Heart left ventricle (tissue), 16 donors: ENCODE measurements at regions of chr9 and their contacts with region 1.

Region 1: GRCh38 chr9:127318651-127319167 is 54.1 kb downstream of the GARNL3 start:
- DNase-seq: peak in 4 of 5 donors; percentile 28 to 64 (median 38)
- ATAC-seq: peak; percentile 51 to 85 (median 83)
- H3K4me3 ChIP-seq: no peak overlapping the region
- H3K27ac ChIP-seq: peak overlapping the region; percentile 8 to 76 (median 60)
- H3K4me1 ChIP-seq: peaks cover 0 to 48% (median 21%) of the 10 kb centered on the region in 12 donors
- H3K27me3 ChIP-seq: no peaks in the 10 kb centered on the region
- CTCF ChIP-seq: no peak
- POLR2A ChIP-seq: no peak

Region 2: DNA sequence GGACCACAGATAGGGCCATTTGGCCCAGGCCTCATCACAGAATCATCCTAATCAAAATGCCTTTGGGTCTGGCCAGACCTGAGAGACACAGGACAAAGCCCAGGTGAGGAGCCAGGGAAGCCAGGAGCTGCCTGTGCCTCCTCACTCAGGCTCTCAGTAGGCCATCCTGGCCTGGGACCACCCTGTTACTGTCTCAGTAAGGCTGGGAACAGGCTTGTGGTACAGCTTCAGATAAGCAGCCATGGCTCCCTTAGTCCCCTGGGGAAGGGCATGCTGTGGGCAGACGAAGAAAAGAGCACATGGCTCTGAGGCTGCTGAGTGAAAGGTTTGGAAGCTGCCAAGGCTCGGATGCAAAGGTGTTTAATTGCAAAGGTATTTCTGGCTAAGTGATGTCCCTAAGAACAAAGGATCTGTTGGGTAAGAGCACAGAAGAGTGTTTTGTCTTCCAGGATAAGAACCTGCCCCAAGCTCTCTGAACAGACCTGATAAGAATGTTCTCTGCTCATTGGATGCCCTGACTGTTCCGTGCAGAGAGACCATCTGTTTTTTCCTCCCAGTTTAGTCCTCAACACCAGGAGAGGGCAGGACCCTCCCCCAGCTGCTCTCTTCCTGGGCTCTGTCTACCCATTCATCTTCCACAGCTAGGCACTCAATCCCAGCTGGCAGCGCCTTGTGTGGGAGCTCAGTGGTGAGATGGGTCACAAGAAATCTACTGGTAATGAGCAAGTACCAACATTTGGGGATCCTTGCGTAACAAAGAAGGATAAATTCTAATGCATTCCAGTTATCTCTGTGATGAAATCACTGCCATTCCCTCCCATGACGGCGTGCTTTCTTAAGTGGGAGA is 214.0 kb before region 1 on chr9:
- intact Hi-C with region 1: no loop called
- DNase-seq: peak in 2 of 5 donors; percentile 63
- ATAC-seq: peak; percentile 10 to 87 (median 68)
- H3K4me3 ChIP-seq: no peak overlapping the region
- H3K27ac ChIP-seq: peak overlapping the region in 9 of 12 donors; percentile 27 to 83 (median 67)
- H3K4me1 ChIP-seq: peaks cover under 1 to 83% (median 42%) of the 10 kb centered on the region in 12 donors
- H3K27me3 ChIP-seq: no peaks in the 10 kb centered on the region
- CTCF ChIP-seq: no peak
- POLR2A ChIP-seq: no peak

Region 3: DNA sequence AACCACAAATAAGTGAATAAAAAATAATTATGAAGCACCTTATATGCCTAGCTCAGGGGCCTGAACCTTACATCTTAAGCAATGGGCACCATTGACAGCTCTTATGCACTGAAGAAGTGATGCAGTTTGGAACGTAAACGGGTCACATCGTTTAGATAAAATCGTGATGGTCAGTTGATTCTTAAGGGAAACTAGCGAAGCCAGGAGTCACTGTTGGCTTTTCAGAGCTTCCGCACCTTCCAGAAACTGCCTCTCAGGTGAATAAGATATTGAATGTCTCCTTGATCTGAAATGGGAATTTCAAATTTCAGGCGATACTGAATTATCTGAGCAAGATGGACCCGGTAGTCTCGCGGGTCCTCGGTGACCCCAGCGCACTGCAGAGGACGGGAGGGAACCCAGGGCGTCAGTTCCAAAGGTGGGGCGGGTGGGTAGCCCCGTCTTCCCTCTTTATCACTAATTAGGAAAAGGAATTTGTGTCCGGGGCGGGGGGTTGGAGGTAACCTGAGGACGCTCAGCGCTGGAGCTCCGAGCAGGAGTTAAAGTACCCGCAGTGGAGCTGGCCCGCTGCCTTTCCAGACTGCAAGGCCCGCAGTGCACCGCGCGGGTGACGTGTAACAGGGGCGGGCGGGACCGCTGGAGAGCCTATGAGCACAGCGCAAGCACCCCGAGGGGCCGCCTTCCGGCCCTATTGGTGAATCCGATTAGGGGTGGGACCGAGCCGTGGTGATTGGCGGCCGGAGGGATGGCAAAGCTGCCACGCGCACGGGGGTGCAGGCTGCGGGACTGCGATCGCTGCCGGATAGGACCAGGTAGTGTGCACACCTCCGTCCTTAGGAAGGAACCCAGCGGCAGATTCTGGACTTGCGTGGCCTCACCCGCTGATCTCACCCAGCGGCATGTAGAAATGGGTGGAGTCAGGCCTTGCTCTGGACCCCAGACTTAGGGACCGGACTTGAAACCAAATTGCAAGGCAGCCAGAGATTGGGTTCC is 73.8 kb before region 1 on chr9:
- intact Hi-C with region 1: loop called in 1 of 10 experiments (anchors 5 kb)
- DNase-seq: peak; percentile 98 to 99 (median 98)
- ATAC-seq: peak; percentile 100
- H3K4me3 ChIP-seq: peak overlapping the region; percentile 42 to 72 (median 63)
- H3K27ac ChIP-seq: peak overlapping the region in 10 of 12 donors; percentile 52 to 88 (median 80)
- H3K4me1 ChIP-seq: peaks cover 0 to 15% (median 7%) of the 10 kb centered on the region in 12 donors
- H3K27me3 ChIP-seq: no peaks in the 10 kb centered on the region
- CTCF ChIP-seq: peak in 1 of 12 donors; percentile 5
- POLR2A ChIP-seq: peak in 1 of 2 donors; percentile 79

Region 4: GRCh38 chr9:127263664-127264063 is 55.0 kb before region 1 on chr9:
- intact Hi-C with region 1: loop called in 1 of 10 experiments (anchors 5 kb)
- DNase-seq: peak in 2 of 5 donors; percentile 39 to 40
- ATAC-seq: peak; percentile 52 to 76 (median 70)
- H3K4me3 ChIP-seq: peak overlapping the region in 7 of 12 donors; percentile 31 to 57 (median 47)
- H3K27ac ChIP-seq: peak overlapping the region in 10 of 12 donors; percentile 8 to 86 (median 57)
- H3K4me1 ChIP-seq: peaks cover 0 to 40% (median 13%) of the 10 kb centered on the region in 12 donors
- H3K27me3 ChIP-seq: no peaks in the 10 kb centered on the region
- CTCF ChIP-seq: no peak
- POLR2A ChIP-seq: no peak

Region 5: GRCh38 chr9:127277099-127277498 is 41.6 kb before region 1 on chr9:
- intact Hi-C with region 1: no loop called
- DNase-seq: no peak
- ATAC-seq: no peak
- H3K4me3 ChIP-seq: no peak overlapping the region
- H3K27ac ChIP-seq: peak overlapping the region in 6 of 12 donors; percentile 16 to 65 (median 26)
- H3K4me1 ChIP-seq: peaks cover 0 to 44% (median 16%) of the 10 kb centered on the region in 12 donors
- H3K27me3 ChIP-seq: no peaks in the 10 kb centered on the region
- CTCF ChIP-seq: no peak
- POLR2A ChIP-seq: no peak

Region 6: DNA sequence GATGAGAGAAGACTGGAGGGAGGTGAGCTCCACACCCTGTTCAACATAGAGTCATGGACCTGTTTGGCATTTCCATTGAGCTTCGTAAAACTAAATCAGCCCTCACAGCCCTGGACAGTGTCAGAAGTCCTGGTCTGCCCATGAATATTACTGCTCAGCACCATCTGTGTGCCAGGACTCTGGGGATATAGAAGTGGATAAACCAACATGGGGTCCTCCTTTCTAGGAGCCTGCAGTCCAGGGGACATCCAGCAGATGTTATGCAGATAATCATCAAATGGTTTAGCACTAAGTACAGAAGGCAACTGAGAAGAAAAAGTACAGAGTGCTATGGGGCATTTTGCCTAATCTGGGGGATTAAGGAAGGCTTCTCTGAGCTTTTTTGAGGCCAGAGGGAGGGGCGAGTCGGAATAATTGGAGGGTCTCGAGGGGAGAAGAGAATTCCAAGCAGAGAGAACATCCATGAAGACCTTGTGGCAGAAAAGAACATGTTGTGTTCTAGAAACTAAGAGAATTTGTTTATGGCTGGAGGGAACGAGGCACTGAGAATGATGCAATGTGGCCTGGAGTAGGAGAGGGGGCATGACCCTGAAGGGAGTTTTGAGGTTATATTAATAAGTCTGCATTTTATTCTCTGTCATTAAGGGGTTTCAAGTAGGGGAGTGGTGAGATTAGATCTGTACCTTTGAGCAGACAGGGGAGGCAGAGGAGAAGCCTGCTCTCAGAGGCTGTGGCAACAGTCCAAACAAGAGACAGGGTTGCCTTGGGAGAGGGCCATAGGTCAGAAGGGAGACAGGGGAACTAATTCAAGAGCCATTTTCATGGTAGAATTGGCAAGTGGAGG is 14.7 kb after region 1 on chr9:
- intact Hi-C with region 1: loop called in 1 of 10 experiments (anchors 2 kb)
- DNase-seq: no peak
- ATAC-seq: peak in 3 of 4 donors; percentile 20 to 28 (median 27)
- H3K4me3 ChIP-seq: no peak overlapping the region
- H3K27ac ChIP-seq: peak overlapping the region in 10 of 12 donors; percentile 10 to 54 (median 26)
- H3K4me1 ChIP-seq: peaks cover 21 to 56% (median 48%) of the 10 kb centered on the region in 12 donors
- H3K27me3 ChIP-seq: no peaks in the 10 kb centered on the region
- CTCF ChIP-seq: no peak
- POLR2A ChIP-seq: no peak

Region 7: DNA sequence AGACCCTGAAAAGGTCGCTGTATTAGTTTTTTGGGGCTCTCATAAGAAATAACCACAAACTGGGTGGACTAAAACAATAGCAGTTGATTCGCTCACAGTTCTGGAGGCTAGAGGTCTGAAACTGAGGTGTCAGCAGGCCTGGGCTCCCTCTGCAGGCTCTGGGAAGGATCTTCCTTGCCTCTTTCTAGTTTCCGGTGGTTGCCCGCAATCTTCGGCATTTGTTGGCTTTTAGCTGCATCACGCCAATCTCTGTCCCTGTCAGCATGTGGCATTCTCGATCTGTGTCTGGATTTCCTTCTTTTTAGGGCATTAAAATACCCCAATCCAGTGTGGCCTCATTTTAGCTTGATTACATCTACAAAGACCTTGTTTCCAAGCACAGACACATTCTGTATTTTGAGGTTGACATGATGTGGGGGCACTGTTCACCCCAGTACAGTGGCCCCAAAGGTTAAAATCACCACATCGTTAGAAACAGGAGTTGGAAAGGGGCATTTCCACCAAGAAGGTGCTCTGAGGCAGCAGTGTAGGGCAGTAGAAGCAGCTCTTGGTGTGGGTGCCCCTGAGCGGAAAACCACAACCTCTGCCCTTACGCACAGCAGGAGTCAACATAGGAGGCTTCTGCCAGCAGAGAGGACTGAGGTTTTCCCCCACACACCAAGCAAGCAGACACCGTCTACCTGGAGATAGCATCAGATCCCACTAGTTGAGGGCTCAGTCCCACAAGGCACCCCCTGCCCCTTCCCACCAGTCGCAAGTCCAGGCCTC is 119.0 kb after region 1 on chr9:
- intact Hi-C with region 1: no loop called
- DNase-seq: no peak
- ATAC-seq: no peak
- H3K4me3 ChIP-seq: no peak overlapping the region
- H3K27ac ChIP-seq: no peak overlapping the region
- H3K4me1 ChIP-seq: no peaks in the 10 kb centered on the region
- H3K27me3 ChIP-seq: no peaks in the 10 kb centered on the region
- CTCF ChIP-seq: no peak
- POLR2A ChIP-seq: no peak